ENCODE measurements at regions of chr1 and their contacts with region 1.

Region 1: GRCh38 chr1:221203224-221204054 is 324.2 kb downstream of the HLX start:
- DNase-seq: peak; percentile 78
- ATAC-seq: no peak
- H3K4me3 Mint-ChIP-seq: no peak overlapping the region
- H3K27ac Mint-ChIP-seq: no peak overlapping the region
- H3K4me1 Mint-ChIP-seq: no peaks in the 10 kb centered on the region
- H3K27me3 Mint-ChIP-seq: no peaks in the 10 kb centered on the region
- CTCF ChIP-seq: peak; percentile 75

Region 2: GRCh38 chr1:220810179-220810653 is 393.2 kb before region 1 on chr1:
- CTCF ChIA-PET with region 1: interaction called, 15 read pairs
- POLR2A ChIA-PET with region 1: no interaction called
- intact Hi-C with region 1: loop called (anchors 5 kb)
- DNase-seq: peak; percentile 84
- ATAC-seq: peak; percentile 99
- H3K4me3 Mint-ChIP-seq: peak overlapping the region; percentile 41
- H3K27ac Mint-ChIP-seq: no peak overlapping the region
- H3K4me1 Mint-ChIP-seq: no peaks in the 10 kb centered on the region
- H3K27me3 Mint-ChIP-seq: peaks cover 10% of the 10 kb centered on the region
- CTCF ChIP-seq: peak; percentile 87

Region 3: GRCh38 chr1:220873868-220874655 is 329.4 kb before region 1 on chr1:
- CTCF ChIA-PET with region 1: interaction called, 21 read pairs
- POLR2A ChIA-PET with region 1: no interaction called
- intact Hi-C with region 1: loop called (anchors 2 kb)
- DNase-seq: peak; percentile 54
- ATAC-seq: peak; percentile 50
- H3K4me3 Mint-ChIP-seq: no peak overlapping the region
- H3K27ac Mint-ChIP-seq: no peak overlapping the region
- H3K4me1 Mint-ChIP-seq: peaks cover 19% of the 10 kb centered on the region
- H3K27me3 Mint-ChIP-seq: peaks cover 60% of the 10 kb centered on the region
- CTCF ChIP-seq: peak; percentile 68

Region 4: DNA sequence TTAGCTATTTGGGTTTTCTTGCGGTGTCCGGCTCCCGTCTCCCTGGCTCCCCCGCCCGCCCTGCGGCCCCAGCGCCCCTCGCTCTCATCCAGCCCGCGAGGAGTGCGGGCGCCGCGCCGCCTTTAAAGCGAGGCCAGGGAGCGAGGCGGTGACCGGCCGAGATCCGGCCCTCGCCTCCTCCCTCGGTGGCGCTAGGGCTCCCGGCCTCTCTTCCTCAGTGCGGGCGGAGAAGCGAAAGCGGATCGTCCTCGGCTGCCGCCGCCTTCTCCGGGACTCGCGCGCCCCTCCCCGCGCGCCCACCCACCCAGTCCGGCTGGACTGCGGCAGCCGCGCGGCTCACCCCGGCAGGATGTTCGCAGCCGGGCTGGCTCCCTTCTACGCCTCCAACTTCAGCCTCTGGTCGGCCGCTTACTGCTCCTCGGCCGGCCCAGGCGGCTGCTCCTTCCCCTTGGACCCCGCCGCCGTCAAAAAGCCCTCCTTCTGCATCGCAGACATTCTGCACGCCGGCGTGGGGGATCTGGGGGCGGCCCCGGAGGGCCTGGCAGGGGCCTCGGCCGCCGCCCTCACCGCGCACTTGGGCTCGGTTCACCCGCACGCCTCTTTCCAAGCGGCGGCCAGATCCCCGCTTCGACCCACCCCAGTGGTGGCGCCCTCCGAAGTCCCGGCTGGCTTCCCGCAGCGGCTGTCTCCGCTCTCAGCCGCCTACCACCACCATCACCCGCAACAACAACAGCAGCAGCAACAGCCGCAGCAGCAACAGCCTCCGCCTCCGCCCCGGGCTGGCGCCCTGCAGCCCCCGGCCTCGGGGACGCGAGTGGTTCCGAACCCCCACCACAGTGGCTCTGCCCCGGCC is 323.7 kb before region 1 on chr1:
- CTCF ChIA-PET with region 1: interaction called, 21 read pairs
- POLR2A ChIA-PET with region 1: no interaction called
- intact Hi-C with region 1: loop called (anchors 2 kb)
- DNase-seq: peak; percentile 17
- ATAC-seq: no peak
- H3K4me3 Mint-ChIP-seq: peak overlapping the region; percentile 62
- H3K27ac Mint-ChIP-seq: no peak overlapping the region
- H3K4me1 Mint-ChIP-seq: peaks cover 31% of the 10 kb centered on the region
- H3K27me3 Mint-ChIP-seq: peaks cover 78% of the 10 kb centered on the region
- CTCF ChIP-seq: no peak

Region 5: GRCh38 chr1:221182791-221183533 is 20.5 kb before region 1 on chr1:
- CTCF ChIA-PET with region 1: interaction called, 10 read pairs
- POLR2A ChIA-PET with region 1: no interaction called
- intact Hi-C with region 1: no loop called
- DNase-seq: no peak
- ATAC-seq: no peak
- H3K4me3 Mint-ChIP-seq: no peak overlapping the region
- H3K27ac Mint-ChIP-seq: no peak overlapping the region
- H3K4me1 Mint-ChIP-seq: no peaks in the 10 kb centered on the region
- H3K27me3 Mint-ChIP-seq: peaks cover 5% of the 10 kb centered on the region
- CTCF ChIP-seq: no peak